Endothelial cell of umbilical vein (primary cell): ENCODE measurements at regions of chr16 and their contacts with region 1.

Region 1: GRCh38 chr16:53518550-53519416 is 15.8 kb upstream of the AKTIP start:
- DNase-seq: peak; percentile 92
- H3K4me3 ChIP-seq: peak overlapping the region in 1 of 3 experiments; percentile 51
- H3K27ac ChIP-seq: peak overlapping the region; percentile 97
- H3K4me1 ChIP-seq: peaks cover 39% of the 10 kb centered on the region
- H3K27me3 ChIP-seq: no peaks in the 10 kb centered on the region
- CTCF ChIP-seq: no peak
- POLR2A ChIP-seq: peak; percentile 73

Region 2: DNA sequence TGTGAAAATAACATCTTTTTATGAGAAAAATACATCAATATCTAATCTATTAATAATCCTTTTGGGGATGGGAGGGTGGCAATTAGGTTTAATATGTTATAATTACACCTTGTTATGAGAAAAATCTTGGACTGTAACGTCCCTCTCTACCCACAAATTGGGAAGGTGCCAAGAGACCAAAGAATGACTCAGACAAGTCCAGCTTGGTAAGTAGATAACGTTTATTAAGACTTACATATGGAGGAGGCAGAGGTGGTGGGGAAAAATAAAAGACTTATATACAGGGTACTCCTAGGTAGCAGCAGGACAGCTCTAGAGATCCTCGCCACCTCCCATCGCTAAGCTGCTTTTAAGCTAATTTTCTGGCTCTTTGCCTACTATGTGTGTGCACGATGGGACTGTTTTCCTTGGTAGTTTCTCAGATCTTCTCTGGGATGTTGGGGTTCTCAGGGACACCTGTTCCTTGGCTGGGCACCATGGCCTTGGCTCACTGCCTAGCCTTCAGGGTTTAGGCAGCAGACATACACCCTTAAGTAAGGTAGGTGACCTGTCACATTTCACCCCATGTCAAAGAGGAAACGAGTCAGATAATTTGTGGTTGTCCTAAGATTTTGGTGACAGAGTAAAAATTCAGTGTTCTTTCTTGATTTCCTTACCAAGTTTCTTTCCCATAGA is 53.0 kb before region 1 on chr16:
- CTCF ChIA-PET with region 1: no interaction called
- POLR2A ChIA-PET with region 1: no interaction called
- dilution Hi-C with region 1: no loop called
- intact Hi-C with region 1: no loop called
- DNase-seq: peak; percentile 83
- H3K4me3 ChIP-seq: no peak overlapping the region
- H3K27ac ChIP-seq: no peak overlapping the region
- H3K4me1 ChIP-seq: peaks cover 6% of the 10 kb centered on the region
- H3K27me3 ChIP-seq: no peaks in the 10 kb centered on the region
- CTCF ChIP-seq: no peak
- POLR2A ChIP-seq: no peak

Region 3: GRCh38 chr16:53626811-53627210 is 108.0 kb after region 1 on chr16:
- CTCF ChIA-PET with region 1: no interaction called
- POLR2A ChIA-PET with region 1: no interaction called
- dilution Hi-C with region 1: no loop called
- intact Hi-C with region 1: loop called (anchors 1 kb)
- DNase-seq: peak; percentile 67
- H3K4me3 ChIP-seq: no peak overlapping the region
- H3K27ac ChIP-seq: peak overlapping the region; percentile 55
- H3K4me1 ChIP-seq: peaks cover 15% of the 10 kb centered on the region
- H3K27me3 ChIP-seq: no peaks in the 10 kb centered on the region
- CTCF ChIP-seq: no peak
- POLR2A ChIP-seq: no peak

Region 4: GRCh38 chr16:53703590-53704444 is 185.0 kb after region 1 on chr16 and contains the starts of genes FTO and RPGRIP1L:
- CTCF ChIA-PET with region 1: no interaction called
- POLR2A ChIA-PET with region 1: no interaction called
- dilution Hi-C with region 1: no loop called
- intact Hi-C with region 1: loop called (anchors 5 kb)
- DNase-seq: peak; percentile 100
- H3K4me3 ChIP-seq: peak within 1 kb of the TSS; percentile 42 to 88 (median 87)
- H3K27ac ChIP-seq: peak within 1 kb of the TSS; percentile 36
- H3K4me1 ChIP-seq: peaks cover 3% of the 10 kb centered on the region
- H3K27me3 ChIP-seq: no peaks in the 10 kb centered on the region
- CTCF ChIP-seq: no peak
- POLR2A ChIP-seq: no peak
- total RNA-seq, gene FTO: 77.8 and 87.1 TPM in 2 replicates
- total RNA-seq, gene RPGRIP1L: 9.7 and 13.2 TPM in 2 replicates